Cardiac septum (tissue), 1 donor: ENCODE measurements at regions of chr7 and their contacts with region 1.

Region 1: GRCh38 chr7:30504347-30505173 is at the start of gene GGCT:
- DNase-seq: peak; percentile 100
- total RNA-seq, gene GGCT: 20.8 TPM

Region 2: DNA sequence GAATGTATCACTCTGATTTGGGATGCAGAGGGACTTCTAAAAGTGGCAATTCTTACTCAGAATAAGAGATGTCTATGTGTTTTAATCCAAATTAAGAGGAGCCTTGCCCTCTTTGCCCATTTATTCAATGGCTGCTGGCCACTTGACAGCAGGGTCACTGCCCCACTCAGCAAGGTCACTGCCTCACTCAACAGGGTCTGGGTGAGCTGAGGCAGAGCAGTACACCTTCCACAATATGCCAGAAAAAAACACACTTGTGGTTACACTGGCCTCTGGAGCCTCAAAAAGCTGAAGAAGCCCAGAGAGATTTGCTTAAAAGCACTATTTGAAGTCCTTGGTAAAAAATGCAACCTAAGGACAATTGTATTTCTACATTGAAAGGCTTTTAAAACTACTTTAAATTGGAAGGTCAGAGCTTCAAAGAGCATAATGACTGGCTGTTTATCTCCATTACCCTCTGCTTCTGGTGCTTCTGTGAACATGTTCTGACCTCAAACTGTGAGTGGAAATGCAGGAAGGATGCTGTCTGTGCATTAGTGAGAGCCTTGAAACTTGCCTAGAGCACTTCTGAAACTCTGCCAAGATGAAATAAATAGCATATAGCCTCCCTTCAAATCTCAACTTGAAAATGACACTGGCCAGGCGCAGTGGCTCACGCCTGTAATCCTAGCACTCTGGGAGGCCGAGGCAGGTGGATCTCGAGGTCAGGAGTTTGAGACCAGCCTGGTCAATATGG is 733.3 kb before region 1 on chr7:
- intact Hi-C with region 1: no loop called
- DNase-seq: no peak

Region 3: GRCh38 chr7:30422922-30423321 is 81.6 kb before region 1 on chr7:
- intact Hi-C with region 1: no loop called
- DNase-seq: no peak

Region 4: DNA sequence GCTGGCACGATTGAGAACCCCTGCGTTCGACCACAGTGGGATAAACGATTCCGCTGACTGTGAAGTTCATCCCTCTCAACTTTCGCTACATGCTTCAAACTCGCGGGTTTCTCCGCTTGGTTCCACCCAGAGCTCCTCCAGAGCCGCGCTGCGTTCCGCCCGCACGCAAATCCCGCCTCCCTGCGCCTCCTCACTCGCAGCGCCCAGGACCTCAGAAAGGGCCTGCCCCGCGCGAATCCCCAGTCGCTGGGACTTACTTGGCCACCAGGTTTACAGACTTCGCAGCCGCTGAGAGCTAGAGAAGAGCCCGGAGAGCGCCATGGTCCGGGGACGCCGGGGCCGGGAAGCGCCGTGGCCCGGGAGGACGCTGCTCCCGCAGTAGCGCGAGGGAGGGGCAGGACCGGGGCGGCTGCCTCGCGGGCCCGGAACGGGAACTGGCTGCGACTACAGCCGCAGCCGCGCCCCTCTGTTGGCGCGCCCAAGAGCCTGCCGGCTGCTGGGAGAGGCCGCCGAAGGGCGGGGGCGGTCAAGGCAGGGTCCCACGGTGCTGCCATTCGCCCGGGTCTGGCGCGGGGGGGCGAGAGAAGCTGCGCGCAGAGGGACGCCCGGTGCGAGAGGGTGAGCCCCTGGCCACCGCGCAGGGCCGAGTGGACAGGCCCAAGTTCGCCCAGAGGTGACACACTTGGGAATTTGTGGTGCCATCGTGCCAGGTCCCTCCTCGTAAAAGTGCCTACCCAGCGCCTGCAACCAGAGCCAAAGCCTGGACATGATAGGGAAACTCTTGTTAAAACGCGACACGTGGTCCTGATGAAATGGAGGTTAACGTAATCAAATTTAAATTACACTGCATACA is 26.0 kb before region 1 on chr7 and contains the start of gene NOD1:
- intact Hi-C with region 1: loop called (anchors 2 kb)
- DNase-seq: peak; percentile 94
- total RNA-seq, gene NOD1: 13.2 TPM

Region 5: DNA sequence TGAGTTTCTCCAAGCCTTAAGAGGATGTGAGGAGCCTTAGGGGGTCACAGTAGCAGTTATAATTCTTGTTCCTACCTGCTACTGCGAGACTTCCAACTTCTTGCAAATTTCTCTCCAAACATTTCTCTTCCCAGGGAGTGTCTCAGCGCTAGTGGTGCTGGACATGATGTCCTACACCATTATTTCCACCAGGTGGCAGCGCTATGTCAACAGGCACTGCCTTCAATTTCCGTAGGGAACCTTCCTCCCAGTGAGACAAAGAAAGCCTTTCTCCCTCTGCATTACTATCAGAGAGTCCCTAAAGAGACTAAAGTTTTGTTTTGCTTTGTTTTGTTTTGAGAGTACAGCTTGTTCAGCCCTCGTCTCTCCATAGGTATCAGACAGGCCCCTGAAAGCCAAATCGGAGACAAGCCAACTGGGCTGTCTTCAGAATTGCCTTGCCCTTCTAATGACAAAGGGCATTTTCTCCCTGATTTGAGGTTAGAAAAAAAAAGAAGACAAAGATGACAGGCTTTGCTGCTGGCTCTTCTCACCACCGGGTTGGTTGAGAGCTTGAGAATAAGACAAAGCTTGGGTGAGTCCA is 44.3 kb after region 1 on chr7:
- intact Hi-C with region 1: loop called (anchors 5 kb)
- DNase-seq: no peak